ENCODE measurements at regions of chr14 and their contacts with region 1.

Region 1: GRCh38 chr14:31360919-31361662 is 59.3 kb downstream of the HEATR5A start:
- DNase-seq: no peak
- ATAC-seq: no peak
- H3K4me3 Mint-ChIP-seq: no peak overlapping the region
- H3K27ac Mint-ChIP-seq: no peak overlapping the region
- H3K4me1 Mint-ChIP-seq: peaks cover 5% of the 10 kb centered on the region
- H3K27me3 Mint-ChIP-seq: no peaks in the 10 kb centered on the region
- CTCF ChIP-seq: no peak

Region 2: GRCh38 chr14:30656190-30656632 is 704.9 kb before region 1 on chr14:
- CTCF ChIA-PET with region 1: no interaction called
- POLR2A ChIA-PET with region 1: no interaction called
- intact Hi-C with region 1: loop called (anchors 1 kb)
- DNase-seq: no peak
- ATAC-seq: peak; percentile 64
- H3K4me3 Mint-ChIP-seq: no peak overlapping the region
- H3K27ac Mint-ChIP-seq: no peak overlapping the region
- H3K4me1 Mint-ChIP-seq: no peaks in the 10 kb centered on the region
- H3K27me3 Mint-ChIP-seq: no peaks in the 10 kb centered on the region
- CTCF ChIP-seq: peak; percentile 71

Region 3: GRCh38 chr14:30982533-30982932 is 378.6 kb before region 1 on chr14:
- CTCF ChIA-PET with region 1: no interaction called
- POLR2A ChIA-PET with region 1: no interaction called
- intact Hi-C with region 1: loop called (anchors 1 kb)
- DNase-seq: no peak
- ATAC-seq: peak; percentile 74
- H3K4me3 Mint-ChIP-seq: no peak overlapping the region
- H3K27ac Mint-ChIP-seq: peak overlapping the region; percentile 53
- H3K4me1 Mint-ChIP-seq: peaks cover 53% of the 10 kb centered on the region
- H3K27me3 Mint-ChIP-seq: no peaks in the 10 kb centered on the region
- CTCF ChIP-seq: no peak

Region 4: DNA sequence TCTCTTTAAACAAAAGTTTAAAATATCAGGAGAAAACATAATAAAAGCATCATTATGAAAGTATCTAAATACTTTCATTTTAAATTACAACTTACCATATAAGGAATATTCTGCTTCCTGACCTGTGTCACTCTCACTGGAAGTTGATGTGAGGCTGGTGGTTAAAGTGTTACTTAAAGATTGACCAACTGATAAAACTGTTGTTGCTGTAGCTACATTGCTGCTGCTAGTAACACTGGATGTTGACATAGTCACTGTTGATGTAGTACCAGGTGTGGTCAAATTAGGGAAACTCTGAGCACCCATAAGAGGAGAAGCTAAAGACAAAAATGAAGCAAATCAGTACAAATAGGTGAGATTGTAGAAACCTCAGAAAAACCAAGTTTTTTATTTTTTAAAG is 233.4 kb before region 1 on chr14:
- CTCF ChIA-PET with region 1: no interaction called
- POLR2A ChIA-PET with region 1: no interaction called
- intact Hi-C with region 1: loop called (anchors 2 kb)
- DNase-seq: no peak
- ATAC-seq: no peak
- H3K4me3 Mint-ChIP-seq: no peak overlapping the region
- H3K27ac Mint-ChIP-seq: peak overlapping the region; percentile 10
- H3K4me1 Mint-ChIP-seq: peaks cover 13% of the 10 kb centered on the region
- H3K27me3 Mint-ChIP-seq: no peaks in the 10 kb centered on the region
- CTCF ChIP-seq: no peak

Region 5: GRCh38 chr14:31556191-31556590 is 195.1 kb after region 1 on chr14:
- CTCF ChIA-PET with region 1: no interaction called
- POLR2A ChIA-PET with region 1: no interaction called
- intact Hi-C with region 1: no loop called
- DNase-seq: no peak
- ATAC-seq: no peak
- H3K4me3 Mint-ChIP-seq: no peak overlapping the region
- H3K27ac Mint-ChIP-seq: no peak overlapping the region
- H3K4me1 Mint-ChIP-seq: peaks cover 11% of the 10 kb centered on the region
- H3K27me3 Mint-ChIP-seq: peaks cover 15% of the 10 kb centered on the region
- CTCF ChIP-seq: no peak